Left colon (tissue), 2 donors: ENCODE measurements at regions of chr10 and their contacts with region 1.

Region 1: DNA sequence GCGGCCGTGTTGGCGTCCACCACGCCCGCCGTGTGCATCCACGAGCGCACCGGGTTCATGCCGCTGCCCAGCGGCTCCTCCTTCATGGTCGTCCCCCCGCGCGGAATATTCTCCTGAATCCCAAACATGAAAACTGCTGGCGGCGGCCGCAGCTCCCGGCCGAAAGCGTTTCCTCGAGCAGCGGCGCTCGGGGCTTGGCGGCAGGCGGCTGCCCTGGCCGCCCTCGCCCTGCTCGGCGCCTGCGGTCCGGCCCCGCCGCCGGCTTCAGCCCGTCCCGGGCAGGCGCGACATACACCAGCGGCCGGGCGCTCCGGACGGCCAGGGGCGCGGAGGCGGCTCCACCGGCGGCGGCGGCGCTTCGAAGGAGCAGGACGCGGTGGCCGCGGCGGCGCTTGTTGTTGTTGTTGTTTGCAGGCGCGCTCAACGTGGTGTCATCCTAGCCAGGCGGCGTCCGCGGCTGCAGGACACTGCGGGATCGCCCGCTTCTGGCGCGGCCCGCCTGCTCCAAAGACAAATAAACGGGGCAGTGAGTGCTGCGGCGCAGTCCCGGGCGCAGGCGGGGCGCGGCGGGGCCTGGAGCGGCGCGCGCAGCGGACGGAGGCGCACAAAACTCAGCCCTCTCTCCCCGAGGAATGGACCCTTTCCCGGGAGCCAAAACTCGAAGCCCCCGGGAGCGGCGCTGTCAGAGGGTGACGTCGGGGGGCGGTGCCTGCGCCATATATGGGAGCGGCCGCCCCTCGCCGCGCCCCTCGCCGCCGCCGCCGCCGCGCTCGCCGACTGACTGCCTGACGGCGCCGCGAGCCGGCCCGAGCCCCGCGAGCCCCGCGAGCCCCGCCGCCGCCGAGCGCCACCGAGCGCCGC is at the start of gene EBF3:
- DNase-seq: peak in 1 of 2 donors; percentile 66
- ATAC-seq: peak; percentile 82
- total RNA-seq, gene EBF3: 0.40 to 0.78 TPM

Region 2: GRCh38 chr10:129030996-129031843 is 932.7 kb before region 1 on chr10:
- intact Hi-C with region 1: loop called in 1 of 2 experiments (anchors 10 kb)
- DNase-seq: peak in 1 of 2 donors; percentile 50
- ATAC-seq: peak; percentile 85

Region 3: DNA sequence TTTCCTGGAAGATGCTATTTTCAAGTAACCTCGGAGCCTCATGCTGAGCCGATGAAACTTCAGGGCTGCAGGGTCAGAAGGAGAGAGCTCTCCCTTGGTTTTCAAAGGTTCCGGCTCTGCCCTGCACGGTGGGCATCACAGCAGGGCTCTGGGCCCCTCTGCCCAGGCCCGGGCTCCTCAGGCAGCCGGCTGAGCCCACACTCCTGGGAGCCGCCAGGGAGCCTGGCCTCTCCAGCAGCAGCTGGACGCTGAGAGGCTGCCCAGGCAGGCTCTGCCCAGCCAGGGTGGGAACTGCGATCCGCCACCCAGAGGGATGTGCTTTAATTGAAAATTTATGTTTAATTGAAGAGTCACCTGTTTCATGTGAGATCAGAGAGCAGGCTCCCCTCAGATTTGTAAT is 594.3 kb before region 1 on chr10:
- intact Hi-C with region 1: no loop called
- DNase-seq: no peak
- ATAC-seq: no peak